Transverse colon (tissue), 4 donors: ENCODE measurements at regions of chr20 and their contacts with region 1.

Region 1: GRCh38 chr20:44080646-44081267 is 106.2 kb downstream of the JPH2 start:
- DNase-seq: peak; percentile 83
- H3K4me3 ChIP-seq: no peak overlapping the region
- H3K27ac ChIP-seq: no peak overlapping the region
- H3K4me1 ChIP-seq: no peaks in the 10 kb centered on the region
- H3K27me3 ChIP-seq: no peaks in the 10 kb centered on the region
- CTCF ChIP-seq: peak; percentile 98 to 99 (median 99)
- EP300 ChIP-seq: no peak
- POLR2A ChIP-seq: no peak

Region 2: DNA sequence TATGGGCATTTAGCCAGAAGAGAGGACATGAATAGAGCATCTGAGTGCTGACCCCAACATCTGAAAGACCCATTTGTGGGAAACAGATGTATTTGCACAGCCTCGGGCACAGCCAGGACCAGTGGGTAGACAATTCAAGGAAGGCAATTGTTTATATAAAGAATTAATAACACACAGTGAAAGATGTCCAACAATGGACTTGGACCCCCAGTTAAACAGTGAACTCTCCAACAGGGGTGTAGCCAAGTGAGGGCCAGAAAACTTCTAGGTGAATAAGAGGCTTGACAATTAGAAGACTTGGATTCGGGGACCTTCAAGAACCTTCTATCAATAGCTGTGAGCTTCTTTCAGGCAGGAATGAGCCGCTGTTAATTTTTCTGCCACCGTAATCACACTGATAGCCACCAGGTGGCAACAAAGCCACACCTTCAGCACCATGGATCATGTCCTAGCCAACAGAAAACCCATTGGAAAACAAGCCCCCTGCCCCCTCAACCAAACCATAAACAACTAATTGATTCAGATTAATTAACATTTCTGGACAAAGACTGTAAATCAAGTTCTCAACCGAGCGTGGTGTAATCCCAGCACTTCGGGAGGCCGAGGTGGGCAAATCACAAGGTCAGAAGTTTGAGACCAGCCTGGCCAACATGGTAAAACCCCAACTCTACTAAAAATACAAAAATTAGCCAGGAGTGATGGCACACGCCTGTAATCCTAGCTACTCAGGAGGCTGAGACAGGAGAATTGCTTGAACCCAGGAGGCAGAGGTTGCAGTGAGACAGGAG is 631.8 kb before region 1 on chr20:
- in situ Hi-C with region 1: loop called in 3 of 4 experiments (anchors 10 to 25 kb)
- intact Hi-C with region 1: no loop called
- DNase-seq: peak; percentile 30
- H3K4me3 ChIP-seq: no peak overlapping the region
- H3K27ac ChIP-seq: no peak overlapping the region
- H3K4me1 ChIP-seq: no peaks in the 10 kb centered on the region
- H3K27me3 ChIP-seq: peaks cover 12% of the 10 kb centered on the region
- CTCF ChIP-seq: peak; percentile 53 to 72 (median 68)
- EP300 ChIP-seq: no peak
- POLR2A ChIP-seq: no peak

Region 3: DNA sequence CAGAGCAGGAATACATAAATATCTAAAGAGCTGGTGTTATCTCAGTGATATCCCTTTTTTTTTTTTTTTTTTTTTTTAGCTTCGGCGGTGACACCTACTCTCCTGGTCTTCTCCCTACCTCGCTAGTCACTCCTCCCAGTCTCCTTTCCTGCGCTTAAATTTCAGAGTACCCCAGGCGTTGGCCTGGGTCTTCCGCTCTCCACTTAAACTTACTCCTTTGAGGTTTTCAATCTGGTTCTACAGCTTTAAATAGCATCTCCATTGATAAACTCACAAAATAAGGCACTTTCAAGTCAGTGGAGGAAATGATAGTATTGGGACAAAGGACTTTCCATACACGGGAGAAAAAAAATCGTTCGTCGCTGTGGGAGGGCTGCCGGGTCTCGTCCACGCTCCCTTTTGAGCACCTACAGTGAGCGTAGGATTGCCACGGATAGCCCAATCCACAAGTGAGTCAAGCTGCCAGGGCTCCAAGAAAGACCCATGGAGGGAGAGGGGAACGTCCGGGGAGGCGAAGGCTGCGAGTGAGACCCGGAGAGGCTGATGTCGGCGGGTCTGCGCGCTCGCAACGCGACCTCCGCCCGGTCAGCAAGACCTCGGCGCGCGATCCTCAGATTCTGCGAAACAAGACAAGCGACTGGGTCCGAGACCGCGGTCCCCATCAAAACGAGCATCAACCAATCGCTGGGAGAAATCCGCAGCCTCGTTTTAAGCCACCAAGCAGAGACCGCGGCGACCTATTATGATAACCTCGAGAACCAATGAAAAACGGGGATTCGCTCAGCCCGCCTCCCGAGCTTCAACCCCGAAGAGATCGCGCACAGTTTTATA is 623.7 kb before region 1 on chr20:
- in situ Hi-C with region 1: loop called in 1 of 4 experiments (anchors 25 kb)
- intact Hi-C with region 1: no loop called
- DNase-seq: peak; percentile 93
- H3K4me3 ChIP-seq: peak overlapping the region; percentile 90 to 97 (median 96)
- H3K27ac ChIP-seq: peak overlapping the region; percentile 99 to 100 (median 100)
- H3K4me1 ChIP-seq: peaks cover 3 to 31% (median 17%) of the 10 kb centered on the region in 4 donors
- H3K27me3 ChIP-seq: no peaks in the 10 kb centered on the region
- CTCF ChIP-seq: no peak
- EP300 ChIP-seq: no peak
- POLR2A ChIP-seq: no peak

Region 4: GRCh38 chr20:43537921-43538877 is 542.6 kb before region 1 on chr20:
- in situ Hi-C with region 1: loop called in 1 of 4 experiments (anchors 25 kb)
- intact Hi-C with region 1: no loop called
- DNase-seq: peak; percentile 75
- H3K4me3 ChIP-seq: no peak overlapping the region
- H3K27ac ChIP-seq: no peak overlapping the region
- H3K4me1 ChIP-seq: peaks cover 0 to 2% (median 0%) of the 10 kb centered on the region in 4 donors
- H3K27me3 ChIP-seq: no peaks in the 10 kb centered on the region
- CTCF ChIP-seq: peak; percentile 87 to 92 (median 89)
- EP300 ChIP-seq: no peak
- POLR2A ChIP-seq: no peak

Region 5: DNA sequence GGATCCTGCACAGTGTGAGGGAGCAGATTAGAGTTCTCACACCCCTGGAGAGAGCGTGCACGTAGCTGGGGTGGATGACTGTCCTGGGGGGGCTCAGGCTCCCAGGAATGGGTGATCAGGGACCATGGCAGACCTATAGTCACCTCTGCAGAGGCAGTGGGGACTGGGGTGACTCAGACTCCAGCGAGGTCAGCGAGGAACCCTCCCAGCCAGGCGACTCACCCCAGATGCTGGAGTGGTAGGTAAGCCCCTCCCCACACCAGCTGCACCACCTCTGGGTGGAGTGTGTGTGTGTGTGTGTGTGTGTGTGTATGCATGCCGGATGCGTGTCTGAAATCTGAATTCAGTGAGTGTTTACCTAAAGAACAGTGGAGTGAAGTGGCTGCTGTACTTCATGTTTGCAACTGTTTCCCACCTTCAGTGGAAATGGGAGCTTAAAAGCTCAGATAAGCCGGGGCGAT is 336.6 kb before region 1 on chr20:
- in situ Hi-C with region 1: loop called in 2 of 4 experiments (anchors 5 kb)
- intact Hi-C with region 1: no loop called
- DNase-seq: no peak
- H3K4me3 ChIP-seq: no peak overlapping the region
- H3K27ac ChIP-seq: no peak overlapping the region
- H3K4me1 ChIP-seq: peaks cover 0 to 3% (median 0%) of the 10 kb centered on the region in 4 donors
- H3K27me3 ChIP-seq: peaks cover 31% of the 10 kb centered on the region
- CTCF ChIP-seq: no peak
- EP300 ChIP-seq: no peak
- POLR2A ChIP-seq: no peak

Region 6: DNA sequence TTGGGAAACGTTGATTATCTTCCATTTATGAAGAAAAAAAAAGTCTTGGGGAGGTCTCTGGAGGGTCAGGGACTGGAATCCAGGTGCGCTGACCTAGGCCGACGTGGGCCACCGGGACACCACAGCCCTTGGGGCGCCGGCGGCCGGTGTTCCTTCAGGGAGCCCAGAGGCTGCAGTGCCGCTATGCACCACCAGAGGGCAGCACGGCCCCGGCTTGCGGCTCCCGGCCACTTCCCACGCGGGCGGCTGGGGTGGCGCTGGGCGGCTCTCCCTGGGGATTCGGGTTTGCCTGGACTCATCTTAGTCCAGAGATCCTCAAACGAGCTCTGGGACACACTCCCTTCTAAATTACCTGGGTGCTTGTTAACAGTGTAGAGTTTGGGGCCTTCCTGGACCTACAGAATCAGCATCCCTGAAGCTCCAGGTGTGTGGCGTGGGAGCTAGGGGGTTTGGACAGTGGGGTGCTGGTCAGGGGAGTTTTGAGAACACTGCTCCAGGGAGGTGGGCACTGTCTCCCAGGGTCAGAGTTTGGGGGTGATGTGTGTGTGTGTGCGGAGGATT is 330.9 kb before region 1 on chr20:
- in situ Hi-C with region 1: loop called in 3 of 4 experiments (anchors 5 kb)
- intact Hi-C with region 1: loop called (anchors 1 kb)
- DNase-seq: peak; percentile 85
- H3K4me3 ChIP-seq: no peak overlapping the region
- H3K27ac ChIP-seq: no peak overlapping the region
- H3K4me1 ChIP-seq: peaks cover 0 to 3% (median 0%) of the 10 kb centered on the region in 4 donors
- H3K27me3 ChIP-seq: peaks cover 29% of the 10 kb centered on the region
- CTCF ChIP-seq: peak; percentile 96 to 100 (median 100)
- EP300 ChIP-seq: no peak
- POLR2A ChIP-seq: no peak

Region 7: DNA sequence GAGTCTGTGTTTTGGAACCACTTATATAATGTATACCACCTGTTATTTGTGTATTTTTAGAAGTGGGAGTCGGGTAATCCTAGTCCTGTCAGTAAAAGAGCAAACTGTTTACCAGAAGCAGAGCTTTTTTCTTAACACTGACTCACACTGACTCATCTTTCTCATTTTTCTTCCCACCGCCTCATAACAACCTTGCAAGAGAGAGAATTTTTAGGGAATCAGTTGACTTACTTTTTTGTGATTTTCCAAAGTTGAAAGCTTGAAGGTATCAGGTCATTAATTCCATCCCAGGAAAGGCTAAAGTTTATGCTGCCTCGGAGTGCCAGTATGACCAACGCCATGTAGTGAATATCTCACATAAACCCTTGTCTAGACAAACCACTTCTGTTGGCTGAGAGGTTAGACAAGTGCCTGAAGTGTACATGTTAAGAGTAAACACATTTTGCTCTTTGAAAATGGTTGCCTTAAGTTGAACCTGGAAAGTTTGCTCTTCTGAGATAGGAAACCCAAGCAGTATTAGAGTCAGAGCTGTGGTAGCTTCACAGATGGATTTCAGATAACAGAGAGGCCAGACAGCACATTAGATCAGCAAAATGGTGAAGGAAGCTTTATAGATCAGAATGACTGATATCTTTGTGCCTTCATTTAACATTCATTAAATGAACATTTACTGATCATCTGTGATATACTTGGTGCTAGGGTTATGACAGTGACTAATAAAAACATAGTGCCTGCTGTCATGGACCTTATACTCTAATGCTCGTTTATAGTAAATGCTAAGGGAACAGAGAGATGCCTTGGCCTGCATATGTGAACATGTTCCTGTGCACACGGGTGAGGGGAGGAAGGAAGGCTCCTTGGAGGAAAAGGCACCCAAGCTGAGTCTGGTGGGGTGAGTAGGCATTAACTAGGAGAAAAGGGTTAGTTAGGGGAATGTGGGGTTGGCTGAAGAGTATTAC is 472.5 kb after region 1 on chr20:
- in situ Hi-C with region 1: no loop called
- intact Hi-C with region 1: no loop called
- DNase-seq: no peak
- H3K4me3 ChIP-seq: no peak overlapping the region
- H3K27ac ChIP-seq: peak overlapping the region; percentile 69 to 76 (median 70)
- H3K4me1 ChIP-seq: peaks cover 5 to 55% (median 22%) of the 10 kb centered on the region in 4 donors
- H3K27me3 ChIP-seq: no peaks in the 10 kb centered on the region
- CTCF ChIP-seq: no peak
- EP300 ChIP-seq: no peak
- POLR2A ChIP-seq: no peak